ENCODE measurements at regions of chr16 and their contacts with region 1.

Region 1: GRCh38 chr16:621528-622105 is 9.2 kb upstream of the WFIKKN1 start:
- DNase-seq: no peak
- H3K4me3 ChIP-seq: no peak overlapping the region
- H3K27ac ChIP-seq: no peak overlapping the region
- H3K4me1 ChIP-seq: peaks cover 0 to 14% (median 5%) of the 10 kb centered on the region in 4 experiments; a peak in 5 of 7 replicates
- H3K27me3 ChIP-seq: no peaks in the 10 kb centered on the region
- CTCF ChIP-seq: no peak
- EP300 ChIP-seq: no peak
- POLR2A ChIP-seq: no peak
- RAD21 ChIP-seq: no peak

Region 2: DNA sequence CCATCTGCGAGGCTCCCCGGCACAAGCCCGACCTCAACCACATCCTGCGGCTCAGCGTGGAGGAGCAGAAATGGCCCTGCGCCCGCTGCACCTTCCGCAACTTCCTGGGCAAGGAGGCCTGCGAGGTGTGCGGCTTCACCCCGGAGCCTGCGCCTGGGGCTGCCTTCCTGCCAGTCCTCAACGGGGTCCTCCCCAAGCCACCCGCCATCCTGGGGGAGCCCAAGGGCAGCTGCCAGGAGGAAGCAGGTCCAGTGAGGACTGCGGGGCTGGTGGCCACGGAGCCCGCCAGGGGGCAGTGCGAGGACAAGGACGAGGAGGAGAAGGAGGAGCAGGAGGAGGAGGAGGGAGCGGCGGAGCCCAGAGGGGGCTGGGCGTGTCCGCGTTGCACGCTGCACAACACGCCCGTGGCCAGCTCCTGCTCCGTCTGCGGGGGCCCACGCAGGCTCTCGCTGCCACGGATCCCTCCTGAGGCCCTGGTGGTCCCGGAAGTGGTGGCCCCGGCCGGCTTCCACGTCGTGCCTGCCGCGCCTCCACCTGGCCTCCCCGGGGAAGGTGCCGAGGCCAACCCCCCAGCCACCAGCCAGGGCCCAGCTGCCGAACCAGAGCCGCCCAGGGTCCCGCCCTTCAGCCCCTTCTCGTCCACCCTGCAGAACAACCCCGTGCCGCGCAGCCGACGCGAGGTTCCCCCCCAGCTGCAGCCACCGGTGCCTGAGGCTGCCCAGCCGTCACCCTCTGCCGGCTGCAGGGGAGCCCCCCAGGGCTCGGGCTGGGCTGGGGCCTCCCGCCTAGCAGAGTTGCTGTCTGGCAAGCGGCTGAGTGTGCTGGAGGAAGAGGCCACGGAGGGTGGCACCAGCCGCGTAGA is 74.5 kb before region 1 on chr16:
- CTCF ChIA-PET with region 1: no interaction called
- POLR2A ChIA-PET with region 1: no interaction called
- DNase-seq: peak in 1 of 2 experiments; percentile 83
- H3K4me3 ChIP-seq: no peak overlapping the region
- H3K27ac ChIP-seq: no peak overlapping the region
- H3K4me1 ChIP-seq: no peaks in the 10 kb centered on the region
- H3K27me3 ChIP-seq: no peaks in the 10 kb centered on the region
- CTCF ChIP-seq: peak; percentile 48 to 68 (median 58)
- EP300 ChIP-seq: no peak
- POLR2A ChIP-seq: no peak
- RAD21 ChIP-seq: peak; percentile 42 to 49

Region 3: DNA sequence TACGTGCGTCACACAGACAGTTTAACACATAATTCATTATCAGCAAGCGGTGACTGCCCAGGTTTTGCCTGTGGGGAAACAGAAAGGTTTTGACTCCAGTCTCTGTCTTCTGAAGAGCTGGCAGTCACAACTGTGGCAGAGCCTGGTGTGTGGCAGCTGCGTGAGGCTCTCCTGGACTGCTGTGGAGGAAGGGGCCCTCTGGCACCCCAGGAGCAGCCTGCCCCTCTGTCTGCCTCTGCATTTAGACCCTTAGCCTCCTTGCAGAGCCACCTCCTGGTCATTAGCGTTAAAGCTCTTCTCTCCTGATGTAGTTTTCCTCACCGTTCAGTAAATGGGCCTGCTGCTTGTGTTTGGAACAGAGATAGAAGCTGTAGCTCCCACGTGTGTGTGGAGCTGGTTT is 20.8 kb before region 1 on chr16:
- CTCF ChIA-PET with region 1: interaction called, 17 read pairs
- POLR2A ChIA-PET with region 1: no interaction called
- DNase-seq: no peak
- H3K4me3 ChIP-seq: no peak overlapping the region
- H3K27ac ChIP-seq: no peak overlapping the region
- H3K4me1 ChIP-seq: peaks cover 0 to 2% (median 0%) of the 10 kb centered on the region in 4 experiments; a peak in 1 of 7 replicates
- H3K27me3 ChIP-seq: no peaks in the 10 kb centered on the region; a peak in 2 of 7 replicates
- CTCF ChIP-seq: peak; percentile 20 to 67 (median 54)
- EP300 ChIP-seq: no peak
- POLR2A ChIP-seq: no peak
- RAD21 ChIP-seq: peak; percentile 25 to 48; a peak in 3 of 4 replicates

Region 4: GRCh38 chr16:610513-611334 is 10.9 kb before region 1 on chr16:
- CTCF ChIA-PET with region 1: interaction called, 29 read pairs
- POLR2A ChIA-PET with region 1: no interaction called
- DNase-seq: peak in 1 of 2 experiments; percentile 91
- H3K4me3 ChIP-seq: no peak overlapping the region
- H3K27ac ChIP-seq: no peak overlapping the region
- H3K4me1 ChIP-seq: no peaks in the 10 kb centered on the region; a peak in 1 of 7 replicates
- H3K27me3 ChIP-seq: no peaks in the 10 kb centered on the region
- CTCF ChIP-seq: peak; percentile 91 to 97 (median 92)
- EP300 ChIP-seq: no peak
- POLR2A ChIP-seq: no peak
- RAD21 ChIP-seq: peak; percentile 74 to 87

Region 5: GRCh38 chr16:636206-637080 is 14.8 kb after region 1 on chr16 and contains the start of gene METTL26:
- CTCF ChIA-PET with region 1: interaction called, 7 read pairs
- POLR2A ChIA-PET with region 1: interaction called, 16 read pairs
- DNase-seq: peak in 1 of 2 experiments; percentile 96
- H3K4me3 ChIP-seq: peak within 1 kb of the TSS; percentile 73 to 89 (median 77)
- H3K27ac ChIP-seq: peak within 1 kb of the TSS; percentile 35; the same call in 1 of the 2 replicates
- H3K4me1 ChIP-seq: peaks cover 0 to 29% (median 19%) of the 10 kb centered on the region in 4 experiments; a peak in 6 of 7 replicates
- H3K27me3 ChIP-seq: no peaks in the 10 kb centered on the region
- CTCF ChIP-seq: no peak
- EP300 ChIP-seq: no peak
- POLR2A ChIP-seq: peak in 1 of 2 experiments; percentile 51; a peak in 2 of 3 replicates
- RAD21 ChIP-seq: 0 out of 4 replicates have a peak, but pooled peaks of 1 of the 2 experiments have one; percentile 0
- total RNA-seq, gene METTL26: 100 and 108 TPM in 2 replicates

Measured in H1 (cell line).